HEK293T (cell line): ENCODE measurements at regions of chr17 and their contacts with region 1.

Region 1: DNA sequence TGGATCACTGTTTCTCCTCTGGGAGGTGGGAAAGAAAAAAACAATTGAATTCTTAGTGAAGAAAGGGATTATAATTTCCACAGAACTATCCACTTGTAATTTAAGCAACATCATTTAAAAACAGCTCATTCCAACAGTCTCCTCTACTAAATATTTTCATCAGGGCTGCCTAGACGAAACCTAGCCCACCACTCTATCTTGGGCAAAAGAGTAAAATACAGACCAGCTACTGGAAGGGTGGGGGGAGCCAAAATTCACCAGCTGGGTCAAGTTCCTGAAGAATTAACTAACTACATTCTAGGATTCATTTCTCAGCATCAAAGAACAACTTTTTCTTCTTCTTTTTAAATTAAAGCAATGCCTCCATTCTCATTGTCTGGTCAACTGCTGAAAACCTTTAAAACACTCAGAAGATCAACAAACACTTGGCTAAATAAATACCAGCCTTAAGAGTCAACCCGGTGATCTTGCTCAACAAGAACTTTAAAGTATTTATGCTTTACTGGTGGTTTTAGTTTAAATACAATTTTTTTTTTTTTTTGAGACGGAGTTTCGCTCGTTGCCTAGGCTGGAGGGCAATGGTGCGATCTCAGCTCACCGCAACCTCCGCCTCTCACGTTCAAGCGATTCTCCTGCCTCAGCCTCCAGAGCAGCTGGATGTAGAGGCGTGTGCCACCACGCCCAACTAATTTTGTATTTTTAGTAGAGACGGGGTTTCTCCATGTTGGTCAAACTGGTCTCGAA is 25.2 kb downstream of the KANSL1 start:
- DNase-seq: no peak

Region 2: DNA sequence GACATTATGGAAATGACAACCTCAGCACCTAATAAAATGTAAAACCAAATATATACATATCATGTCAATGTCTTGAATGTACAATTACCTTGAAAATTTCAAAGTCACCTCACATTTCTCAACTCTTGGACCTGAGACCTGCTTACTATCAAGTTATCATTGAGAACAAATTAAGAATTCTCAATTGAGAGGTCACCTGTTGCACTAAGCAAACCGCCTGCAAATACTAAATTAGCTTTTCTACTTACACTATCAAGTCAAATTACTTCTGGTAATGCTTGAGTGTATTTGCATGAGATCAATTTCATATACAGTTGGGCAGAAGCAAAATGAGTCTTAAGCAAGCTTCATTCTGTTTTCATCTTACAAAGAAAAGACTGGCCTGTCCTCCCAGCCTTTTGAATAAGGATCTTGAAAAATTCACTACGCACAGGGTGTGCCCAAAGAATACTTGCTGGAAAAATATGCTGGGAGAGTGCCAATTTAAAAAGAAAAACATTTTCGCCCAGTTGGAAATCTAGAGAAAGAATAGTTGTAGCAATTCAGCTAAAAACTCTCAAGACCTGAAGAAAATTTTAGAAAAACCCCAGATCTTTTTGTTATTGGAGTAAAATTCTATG is 10.4 kb before region 1 on chr17:
- CTCF ChIA-PET with region 1: interaction called, 11 read pairs
- POLR2A ChIA-PET with region 1: no interaction called
- DNase-seq: no peak

Region 3: DNA sequence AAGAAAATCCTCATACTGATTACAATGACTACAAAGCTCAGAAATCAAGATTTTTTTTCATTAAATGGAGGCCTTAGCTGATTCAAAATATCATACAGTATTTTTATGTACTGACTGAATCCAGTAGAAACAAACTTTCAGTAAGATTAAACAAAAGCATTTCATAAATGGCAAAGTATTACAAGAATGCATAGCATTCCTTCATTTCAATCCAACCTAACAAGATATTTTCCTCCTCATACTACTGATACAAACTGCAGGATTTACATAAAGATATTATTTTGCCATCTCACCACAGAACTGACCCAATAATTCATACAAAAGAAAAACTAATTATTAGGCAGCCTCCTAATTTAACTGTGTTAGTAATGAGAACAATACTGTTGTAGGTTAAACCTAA is 31.4 kb after region 1 on chr17:
- CTCF ChIA-PET with region 1: no interaction called
- POLR2A ChIA-PET with region 1: no interaction called
- DNase-seq: no peak

Region 4: GRCh38 chr17:46274238-46274637 is 106.2 kb after region 1 on chr17:
- CTCF ChIA-PET with region 1: no interaction called
- POLR2A ChIA-PET with region 1: no interaction called
- DNase-seq: no peak